Psoas muscle (tissue), 8 donors: ENCODE measurements at regions of chr15 and their contacts with region 1.

Region 1: DNA sequence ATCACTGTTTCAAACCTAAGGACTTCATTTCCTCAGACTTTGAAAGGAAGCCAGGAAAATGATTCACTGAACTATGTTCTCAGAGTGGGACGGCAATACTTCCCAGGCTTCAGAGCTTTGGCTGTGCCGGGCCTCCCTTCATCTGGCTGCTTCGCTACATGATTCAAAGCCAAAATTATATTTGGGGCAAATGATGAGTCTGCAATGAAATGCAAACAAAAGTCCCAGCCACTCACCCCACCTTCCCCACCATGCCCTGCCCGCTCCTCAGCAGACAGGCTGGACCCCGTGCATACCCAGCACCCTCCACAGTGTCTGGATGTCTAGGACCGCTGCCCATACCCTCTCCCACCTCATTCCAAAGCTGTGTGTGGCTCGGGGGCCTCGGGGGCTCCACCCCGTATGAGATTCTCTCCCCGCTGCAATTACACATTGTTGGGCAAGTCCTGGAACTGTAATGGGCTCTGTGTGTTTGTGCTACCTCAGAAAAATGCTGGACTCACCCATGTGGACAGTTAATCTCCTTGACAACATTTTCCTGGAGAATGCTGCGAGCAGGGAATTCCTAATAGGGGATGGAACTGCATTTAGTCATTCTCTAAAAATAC is 32.2 kb downstream of the ATP10A start:
- DNase-seq: peak; percentile 67 to 71
- ATAC-seq: peak; percentile 48 to 85 (median 84)
- H3K4me3 ChIP-seq: no peak overlapping the region
- H3K27ac ChIP-seq: peak overlapping the region; percentile 58
- H3K4me1 ChIP-seq: no peaks in the 10 kb centered on the region
- H3K27me3 ChIP-seq: no peaks in the 10 kb centered on the region
- CTCF ChIP-seq: no peak

Region 2: GRCh38 chr15:25481207-25481859 is 349.6 kb before region 1 on chr15:
- intact Hi-C with region 1: no loop called
- DNase-seq: no peak
- ATAC-seq: peak in 3 of 4 donors; percentile 23 to 47 (median 37)
- H3K4me3 ChIP-seq: peak overlapping the region; percentile 27
- H3K27ac ChIP-seq: no peak overlapping the region
- H3K4me1 ChIP-seq: no peaks in the 10 kb centered on the region
- H3K27me3 ChIP-seq: no peaks in the 10 kb centered on the region
- CTCF ChIP-seq: no peak

Region 3: DNA sequence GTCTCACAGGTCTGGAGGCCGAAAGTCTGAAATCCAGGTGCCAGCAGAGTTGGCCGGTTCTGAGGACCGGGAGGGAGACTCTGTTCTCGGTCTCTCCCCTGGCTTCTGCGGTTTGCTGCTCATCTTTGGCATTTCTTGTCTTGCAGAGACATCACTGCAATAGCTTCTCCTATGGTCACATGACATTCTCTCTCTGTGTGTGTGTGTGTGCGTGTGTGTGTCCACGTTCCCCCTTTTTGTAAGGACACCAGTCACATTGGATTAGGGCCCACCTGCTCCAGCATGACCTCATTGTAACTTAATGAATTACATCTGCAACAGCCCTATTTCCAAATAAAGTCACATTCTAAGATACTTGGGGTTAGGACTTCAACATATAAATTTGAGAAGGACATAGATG is 44.6 kb after region 1 on chr15:
- intact Hi-C with region 1: loop called in 1 of 2 experiments (anchors 5 kb)
- DNase-seq: no peak
- ATAC-seq: no peak
- H3K4me3 ChIP-seq: no peak overlapping the region
- H3K27ac ChIP-seq: no peak overlapping the region
- H3K4me1 ChIP-seq: no peaks in the 10 kb centered on the region
- H3K27me3 ChIP-seq: no peaks in the 10 kb centered on the region
- CTCF ChIP-seq: no peak

Region 4: DNA sequence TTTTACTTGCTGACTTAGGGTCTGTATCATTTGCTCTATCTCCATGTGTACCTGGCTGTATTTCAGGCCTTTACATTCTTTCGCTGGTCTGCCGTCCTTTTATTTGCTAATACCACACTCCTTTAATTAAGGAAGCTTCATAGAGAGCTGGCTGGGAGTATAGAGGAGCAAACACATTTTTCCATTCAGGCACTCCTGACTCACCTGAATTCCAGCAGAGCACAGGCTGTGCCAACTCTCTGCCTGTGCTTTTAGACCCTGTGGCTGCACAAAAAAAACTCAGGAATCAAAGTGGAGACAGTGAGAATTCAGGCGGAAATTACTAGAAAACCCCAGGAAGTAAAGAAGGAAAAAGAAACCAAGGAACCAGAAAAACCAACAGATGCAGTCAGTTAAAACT is 61.2 kb after region 1 on chr15:
- intact Hi-C with region 1: loop called in 1 of 2 experiments (anchors 10 kb)
- DNase-seq: no peak
- ATAC-seq: peak in 2 of 4 donors; percentile 57 to 58
- H3K4me3 ChIP-seq: no peak overlapping the region
- H3K27ac ChIP-seq: no peak overlapping the region
- H3K4me1 ChIP-seq: peaks cover 4% of the 10 kb centered on the region
- H3K27me3 ChIP-seq: no peaks in the 10 kb centered on the region
- CTCF ChIP-seq: no peak

Region 5: GRCh38 chr15:25933456-25934158 is 102.7 kb after region 1 on chr15:
- intact Hi-C with region 1: no loop called
- DNase-seq: peak; percentile 68 to 80
- ATAC-seq: peak; percentile 79 to 94 (median 86)
- H3K4me3 ChIP-seq: peak overlapping the region; percentile 21
- H3K27ac ChIP-seq: no peak overlapping the region
- H3K4me1 ChIP-seq: no peaks in the 10 kb centered on the region
- H3K27me3 ChIP-seq: no peaks in the 10 kb centered on the region
- CTCF ChIP-seq: peak; percentile 64